Endothelial cell of umbilical vein (primary cell): ENCODE measurements at regions of chr3 and their contacts with region 1.

Region 1: GRCh38 chr3:15405448-15406050 is 21.8 kb downstream of the METTL6 start:
- DNase-seq: peak; percentile 71
- H3K4me3 ChIP-seq: no peak overlapping the region
- H3K27ac ChIP-seq: no peak overlapping the region
- H3K4me1 ChIP-seq: no peaks in the 10 kb centered on the region
- H3K27me3 ChIP-seq: no peaks in the 10 kb centered on the region
- CTCF ChIP-seq: peak; percentile 49 to 50
- POLR2A ChIP-seq: no peak

Region 2: GRCh38 chr3:15108082-15108545 is 297.4 kb before region 1 on chr3:
- CTCF ChIA-PET with region 1: interaction called, 17 read pairs
- POLR2A ChIA-PET with region 1: no interaction called
- dilution Hi-C with region 1: no loop called
- intact Hi-C with region 1: loop called (anchors 2 kb)
- DNase-seq: peak; percentile 62
- H3K4me3 ChIP-seq: no peak overlapping the region
- H3K27ac ChIP-seq: no peak overlapping the region
- H3K4me1 ChIP-seq: no peaks in the 10 kb centered on the region
- H3K27me3 ChIP-seq: peaks cover 2 to 3% of the 10 kb centered on the region in 2 experiments
- CTCF ChIP-seq: peak; percentile 88 to 96
- POLR2A ChIP-seq: no peak

Region 3: GRCh38 chr3:15205934-15206661 is 199.5 kb before region 1 on chr3 and contains the start of gene CAPN7:
- CTCF ChIA-PET with region 1: interaction called, 205 read pairs
- POLR2A ChIA-PET with region 1: interaction called, 6 read pairs
- dilution Hi-C with region 1: no loop called
- intact Hi-C with region 1: loop called (anchors 1 kb)
- DNase-seq: peak; percentile 98
- H3K4me3 ChIP-seq: peak within 1 kb of the TSS; percentile 69 to 94 (median 87)
- H3K27ac ChIP-seq: peak within 1 kb of the TSS; percentile 66
- H3K4me1 ChIP-seq: peaks cover 6% of the 10 kb centered on the region
- H3K27me3 ChIP-seq: no peaks in the 10 kb centered on the region
- CTCF ChIP-seq: peak; percentile 31 to 50
- POLR2A ChIP-seq: peak; percentile 86
- total RNA-seq, gene CAPN7: 28.8 and 32.7 TPM in 2 replicates

Region 4: DNA sequence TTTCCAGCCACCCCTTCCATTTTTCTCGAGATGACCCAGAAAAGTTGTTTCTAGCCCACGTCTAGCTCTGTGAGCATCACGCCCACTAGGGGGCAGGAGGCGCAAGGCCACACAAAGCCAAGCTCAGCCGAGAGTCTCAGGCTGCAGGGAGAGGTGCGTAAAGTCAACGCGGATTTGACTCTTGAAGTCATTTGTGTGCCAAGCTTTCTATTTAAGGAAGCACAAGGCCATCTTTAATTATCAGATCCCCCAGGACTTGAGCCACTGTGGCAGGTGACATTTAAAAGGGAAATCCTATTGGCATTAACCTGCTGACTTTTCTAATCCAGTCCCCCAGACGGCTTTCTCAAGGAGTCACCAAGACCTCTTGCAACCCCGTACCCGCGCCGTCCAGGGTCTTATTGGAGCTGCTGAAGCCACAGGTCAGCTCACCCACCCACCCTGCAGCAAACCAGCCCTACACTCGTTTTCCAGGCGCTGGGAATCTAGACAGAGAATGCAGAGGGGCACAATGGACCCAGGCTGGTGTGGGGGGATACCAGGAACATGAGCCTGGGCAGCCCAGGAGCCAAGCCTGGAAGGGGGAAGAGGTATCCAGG is 137.4 kb before region 1 on chr3:
- CTCF ChIA-PET with region 1: interaction called, 350 read pairs
- POLR2A ChIA-PET with region 1: interaction called, 8 read pairs
- dilution Hi-C with region 1: no loop called
- intact Hi-C with region 1: loop called (anchors 1 kb)
- DNase-seq: peak; percentile 79
- H3K4me3 ChIP-seq: no peak overlapping the region
- H3K27ac ChIP-seq: peak overlapping the region; percentile 98
- H3K4me1 ChIP-seq: peaks cover 24% of the 10 kb centered on the region
- H3K27me3 ChIP-seq: no peaks in the 10 kb centered on the region
- CTCF ChIP-seq: peak; percentile 92 to 97
- POLR2A ChIP-seq: no peak

Region 5: GRCh38 chr3:15377961-15378791 is 27.4 kb before region 1 on chr3:
- CTCF ChIA-PET with region 1: interaction called, 10 read pairs
- POLR2A ChIA-PET with region 1: no interaction called
- dilution Hi-C with region 1: no loop called
- intact Hi-C with region 1: no loop called
- DNase-seq: peak; percentile 96
- H3K4me3 ChIP-seq: no peak overlapping the region
- H3K27ac ChIP-seq: peak overlapping the region; percentile 71
- H3K4me1 ChIP-seq: peaks cover 2% of the 10 kb centered on the region
- H3K27me3 ChIP-seq: no peaks in the 10 kb centered on the region
- CTCF ChIP-seq: peak; percentile 81 to 91
- POLR2A ChIP-seq: no peak

Region 6: GRCh38 chr3:15557511-15557946 is 152.0 kb after region 1 on chr3:
- CTCF ChIA-PET with region 1: interaction called, 10 read pairs
- POLR2A ChIA-PET with region 1: no interaction called
- dilution Hi-C with region 1: no loop called
- intact Hi-C with region 1: loop called (anchors 1 kb)
- DNase-seq: peak; percentile 93
- H3K4me3 ChIP-seq: no peak overlapping the region
- H3K27ac ChIP-seq: no peak overlapping the region
- H3K4me1 ChIP-seq: no peaks in the 10 kb centered on the region
- H3K27me3 ChIP-seq: no peaks in the 10 kb centered on the region
- CTCF ChIP-seq: peak; percentile 36 to 37
- POLR2A ChIP-seq: no peak

Region 7: GRCh38 chr3:15578289-15578867 is 172.8 kb after region 1 on chr3:
- CTCF ChIA-PET with region 1: no interaction called
- POLR2A ChIA-PET with region 1: no interaction called
- dilution Hi-C with region 1: no loop called
- intact Hi-C with region 1: no loop called
- DNase-seq: no peak
- H3K4me3 ChIP-seq: no peak overlapping the region
- H3K27ac ChIP-seq: no peak overlapping the region
- H3K4me1 ChIP-seq: no peaks in the 10 kb centered on the region
- H3K27me3 ChIP-seq: no peaks in the 10 kb centered on the region
- CTCF ChIP-seq: no peak
- POLR2A ChIP-seq: no peak